MCF 10A (cell line): ENCODE measurements at regions of chr1 and their contacts with region 1.

Region 1: DNA sequence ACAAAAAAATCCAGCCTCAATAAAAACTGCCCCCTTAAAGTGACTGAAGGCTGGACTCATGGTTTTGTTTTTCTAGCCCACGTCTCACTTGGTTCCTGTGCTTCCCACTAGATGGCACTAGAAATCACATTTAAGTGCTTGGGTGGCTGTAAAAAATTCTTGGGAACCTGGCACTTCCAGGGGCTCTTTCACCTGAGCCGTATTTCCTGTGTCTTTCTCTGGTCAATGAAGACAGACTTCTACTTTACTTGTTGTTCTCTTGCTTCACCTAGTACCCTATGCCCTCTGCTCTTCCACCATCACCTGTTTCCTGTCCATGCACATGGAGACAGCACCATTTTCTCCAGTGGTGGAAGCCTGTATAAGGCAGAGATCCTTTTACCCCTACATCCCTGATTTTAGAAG is 20.0 kb downstream of the METTL13 start:
- DNase-seq: peak; percentile 73
- H3K4me3 Mint-ChIP-seq: no peak overlapping the region
- H3K27ac Mint-ChIP-seq: no peak overlapping the region
- H3K4me1 Mint-ChIP-seq: no peaks in the 10 kb centered on the region
- H3K27me3 Mint-ChIP-seq: no peaks in the 10 kb centered on the region
- CTCF ChIP-seq: peak; percentile 88

Region 2: DNA sequence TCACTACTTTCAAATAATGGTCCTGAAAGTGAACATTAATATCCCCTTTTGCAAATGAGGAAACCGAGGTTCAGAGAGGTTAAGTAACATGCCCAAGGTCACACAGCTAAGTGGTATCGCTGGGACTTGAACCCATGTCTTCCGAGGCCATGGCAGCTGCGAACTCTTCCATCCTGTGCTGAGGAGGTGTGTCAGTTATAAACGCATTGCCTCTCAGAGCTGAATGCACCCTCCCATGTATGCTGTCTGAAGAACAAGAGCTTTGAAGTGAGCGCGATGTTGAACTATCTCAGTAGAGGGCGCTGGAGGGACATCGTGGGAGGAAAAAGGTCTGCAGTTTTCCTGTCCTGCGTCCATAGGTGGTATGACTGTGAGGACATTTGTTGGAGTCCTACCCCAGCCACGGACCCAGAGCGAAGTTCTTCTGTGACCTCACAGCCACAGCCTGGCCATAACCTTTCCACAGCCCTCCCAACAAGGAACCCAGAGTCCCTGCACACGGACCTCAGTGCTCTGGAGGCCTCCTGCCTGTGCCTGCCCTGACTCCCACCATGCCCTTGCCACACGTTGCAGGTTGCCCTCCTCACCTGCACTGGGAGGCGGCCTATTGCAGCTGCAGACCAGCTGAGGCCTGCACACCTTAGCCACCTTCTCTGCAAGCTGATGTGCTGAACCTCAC is 156.5 kb before region 1 on chr1:
- CTCF ChIA-PET with region 1: interaction called, 39 read pairs
- POLR2A ChIA-PET with region 1: no interaction called
- intact Hi-C with region 1: loop called (anchors 1 kb)
- DNase-seq: peak; percentile 94
- H3K4me3 Mint-ChIP-seq: no peak overlapping the region
- H3K27ac Mint-ChIP-seq: no peak overlapping the region
- H3K4me1 Mint-ChIP-seq: no peaks in the 10 kb centered on the region
- H3K27me3 Mint-ChIP-seq: no peaks in the 10 kb centered on the region
- CTCF ChIP-seq: peak; percentile 74

Region 3: GRCh38 chr1:171788696-171789095 is 12.8 kb before region 1 on chr1:
- CTCF ChIA-PET with region 1: interaction called, 79 read pairs
- POLR2A ChIA-PET with region 1: no interaction called
- intact Hi-C with region 1: no loop called
- DNase-seq: peak; percentile 77
- H3K4me3 Mint-ChIP-seq: no peak overlapping the region
- H3K27ac Mint-ChIP-seq: peak overlapping the region; percentile 67
- H3K4me1 Mint-ChIP-seq: peaks cover 48% of the 10 kb centered on the region
- H3K27me3 Mint-ChIP-seq: no peaks in the 10 kb centered on the region
- CTCF ChIP-seq: no peak

Region 4: DNA sequence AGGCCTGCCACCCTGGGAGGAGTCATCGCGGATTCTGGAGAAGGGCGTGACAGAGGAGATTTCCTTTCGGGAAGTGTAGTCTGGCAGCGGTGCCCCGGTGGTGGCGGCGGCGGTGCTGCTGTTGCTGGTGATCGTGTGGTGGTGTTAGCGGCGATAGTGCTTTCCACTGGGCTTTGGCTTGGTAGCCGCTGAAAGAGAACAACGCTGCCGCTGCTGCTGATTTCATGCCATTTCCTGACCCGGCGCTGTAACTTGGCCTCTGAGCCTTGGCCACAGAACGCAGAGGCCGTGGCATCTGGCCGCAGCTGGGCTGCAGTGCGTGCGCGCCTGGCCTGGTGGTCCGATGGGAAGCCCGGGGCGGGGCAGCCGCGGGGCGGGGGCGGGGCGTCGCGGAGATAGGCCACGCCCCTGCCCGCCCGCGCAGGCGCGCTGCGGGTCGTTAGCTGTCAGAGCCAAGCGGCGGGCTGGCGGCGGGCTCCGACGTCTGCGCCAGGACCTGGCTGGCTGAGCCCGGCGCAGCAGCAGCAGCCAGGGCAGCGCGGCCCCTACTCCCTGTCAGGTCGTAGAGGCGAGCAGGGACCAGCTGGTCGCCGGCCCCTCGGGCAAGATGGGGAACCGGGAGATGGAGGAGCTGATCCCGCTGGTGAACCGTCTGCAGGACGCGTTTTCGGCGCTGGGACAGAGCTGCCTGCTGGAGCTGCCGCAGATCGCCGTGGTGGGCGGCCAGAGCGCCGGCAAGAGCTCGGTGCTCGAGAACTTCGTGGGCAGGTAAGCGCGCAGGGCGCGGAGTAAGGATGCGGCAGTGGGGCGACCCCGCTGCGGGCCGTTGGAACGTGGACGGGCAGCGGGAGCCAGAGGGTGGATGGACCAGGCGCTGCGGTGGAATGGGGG is 39.8 kb after region 1 on chr1 and contains the start of gene DNM3:
- CTCF ChIA-PET with region 1: interaction called, 52 read pairs
- POLR2A ChIA-PET with region 1: interaction called, 3 read pairs
- intact Hi-C with region 1: no loop called
- DNase-seq: peak; percentile 74
- H3K4me3 Mint-ChIP-seq: peak within 1 kb of the TSS; percentile 71
- H3K27ac Mint-ChIP-seq: peak within 1 kb of the TSS; percentile 73
- H3K4me1 Mint-ChIP-seq: peaks cover 16% of the 10 kb centered on the region
- H3K27me3 Mint-ChIP-seq: peaks cover 33% of the 10 kb centered on the region
- CTCF ChIP-seq: no peak
- total RNA-seq, gene DNM3: 0.44 and 0.68 TPM in 2 replicates

Region 5: DNA sequence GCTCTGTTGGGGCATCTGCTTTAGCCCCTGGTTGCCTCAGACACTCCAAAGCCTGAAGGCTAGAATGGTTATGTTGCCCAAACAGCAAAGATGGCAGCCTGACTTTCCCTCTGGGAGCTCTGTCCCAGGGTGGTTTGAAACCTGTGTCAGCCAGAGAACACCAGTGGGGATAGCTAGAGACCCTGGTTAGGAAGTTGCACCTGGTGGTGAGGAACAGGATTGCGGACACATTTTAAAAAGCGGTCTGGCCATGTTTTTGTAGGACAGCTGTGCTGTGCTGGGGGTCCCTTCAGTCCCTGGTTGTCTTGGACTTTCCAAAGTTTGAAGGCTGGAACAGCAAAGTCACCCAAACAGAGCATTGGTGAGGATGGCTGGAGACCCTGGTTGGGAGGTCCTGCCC is 127.6 kb after region 1 on chr1:
- CTCF ChIA-PET with region 1: interaction called, 22 read pairs
- POLR2A ChIA-PET with region 1: no interaction called
- intact Hi-C with region 1: no loop called
- DNase-seq: no peak
- H3K4me3 Mint-ChIP-seq: no peak overlapping the region
- H3K27ac Mint-ChIP-seq: no peak overlapping the region
- H3K4me1 Mint-ChIP-seq: no peaks in the 10 kb centered on the region
- H3K27me3 Mint-ChIP-seq: no peaks in the 10 kb centered on the region
- CTCF ChIP-seq: peak; percentile 11

Region 6: DNA sequence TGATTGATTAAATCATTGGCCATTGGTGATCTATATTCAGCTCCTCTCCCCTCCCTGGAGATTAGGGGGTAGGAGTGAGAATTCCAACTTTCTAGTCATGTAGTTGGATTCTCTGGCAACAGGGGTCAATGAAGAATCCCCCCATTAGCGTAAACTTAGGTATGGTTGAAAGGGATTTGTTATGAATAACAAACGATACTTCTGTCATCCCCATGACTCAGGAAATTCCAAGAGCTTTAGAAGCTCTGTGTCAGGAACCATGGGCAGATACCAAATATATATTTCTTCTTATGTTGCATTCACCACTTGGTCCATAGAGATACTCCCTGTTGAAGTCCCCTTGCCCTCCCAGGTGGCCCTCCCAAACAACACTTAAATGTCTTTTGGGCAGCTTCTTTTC is 164.3 kb after region 1 on chr1:
- CTCF ChIA-PET with region 1: interaction called, 76 read pairs
- POLR2A ChIA-PET with region 1: interaction called, 5 read pairs
- intact Hi-C with region 1: no loop called
- DNase-seq: no peak
- H3K4me3 Mint-ChIP-seq: no peak overlapping the region
- H3K27ac Mint-ChIP-seq: no peak overlapping the region
- H3K4me1 Mint-ChIP-seq: no peaks in the 10 kb centered on the region
- H3K27me3 Mint-ChIP-seq: no peaks in the 10 kb centered on the region
- CTCF ChIP-seq: no peak

Region 7: GRCh38 chr1:172429331-172430127 is 628.0 kb after region 1 on chr1:
- CTCF ChIA-PET with region 1: interaction called, 6 read pairs
- POLR2A ChIA-PET with region 1: no interaction called
- intact Hi-C with region 1: loop called (anchors 5 kb)
- DNase-seq: peak; percentile 83
- H3K4me3 Mint-ChIP-seq: no peak overlapping the region
- H3K27ac Mint-ChIP-seq: no peak overlapping the region
- H3K4me1 Mint-ChIP-seq: peaks cover 5% of the 10 kb centered on the region
- H3K27me3 Mint-ChIP-seq: no peaks in the 10 kb centered on the region
- CTCF ChIP-seq: peak; percentile 78

Region 8: GRCh38 chr1:173224280-173224892 is 1422.9 kb after region 1 on chr1:
- CTCF ChIA-PET with region 1: no interaction called
- POLR2A ChIA-PET with region 1: no interaction called
- intact Hi-C with region 1: no loop called
- DNase-seq: no peak
- H3K4me3 Mint-ChIP-seq: no peak overlapping the region
- H3K27ac Mint-ChIP-seq: no peak overlapping the region
- H3K4me1 Mint-ChIP-seq: no peaks in the 10 kb centered on the region
- H3K27me3 Mint-ChIP-seq: no peaks in the 10 kb centered on the region
- CTCF ChIP-seq: no peak